HepG2 (cell line): ENCODE measurements at regions of chr6 and their contacts with region 1.

Region 1: DNA sequence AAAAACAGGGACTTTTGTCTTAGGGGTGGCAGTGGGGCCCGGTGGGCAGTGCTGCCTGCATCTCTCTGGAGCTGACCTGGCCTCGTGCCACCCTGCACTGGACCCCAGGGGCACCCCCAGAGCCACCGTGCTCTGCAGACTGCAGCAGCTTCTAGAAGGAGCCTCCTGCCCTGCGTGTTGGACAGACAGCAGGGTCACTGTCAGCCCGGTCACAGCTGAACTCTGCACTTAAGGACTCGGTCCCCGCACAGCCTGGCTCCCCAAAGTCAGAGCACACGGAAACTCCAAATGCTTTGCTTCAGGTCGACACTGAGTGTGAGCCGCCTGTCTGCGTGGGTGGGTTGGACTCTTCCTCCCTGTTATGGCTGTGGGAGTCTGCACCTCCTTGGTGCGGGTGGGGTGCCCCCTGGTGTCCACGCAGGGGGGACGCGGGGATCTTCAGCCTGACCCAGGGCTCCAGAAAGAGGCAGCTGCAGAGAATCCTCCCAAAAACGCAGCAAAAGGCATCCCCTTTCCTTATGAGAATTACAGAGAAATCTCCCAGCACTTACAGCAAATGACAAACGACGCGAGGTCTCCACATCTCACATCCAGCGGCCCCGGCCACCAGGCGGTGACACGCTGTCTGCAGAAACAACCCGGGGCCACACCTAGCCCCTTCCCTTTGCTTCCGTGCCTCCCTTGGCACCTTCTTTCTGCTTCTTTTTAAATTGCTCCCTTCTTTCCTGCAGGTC is 36.3 kb upstream of the DACT2 start:
- DNase-seq: peak; percentile 49
- ATAC-seq: peak; percentile 99
- H3K4me3 ChIP-seq: peak overlapping the region in 1 of 3 experiments; percentile 61; a peak in 2 of 6 replicates
- H3K27ac ChIP-seq: no peak overlapping the region
- H3K4me1 ChIP-seq: peaks cover 10% of the 10 kb centered on the region
- H3K27me3 ChIP-seq: peaks cover 0 to 3% of the 10 kb centered on the region in 2 experiments; a peak in 1 of 5 replicates
- CTCF ChIP-seq: peak; percentile 99
- EP300 ChIP-seq: no peak
- POLR2A ChIP-seq: no peak
- RAD21 ChIP-seq: peak; percentile 99

Region 2: DNA sequence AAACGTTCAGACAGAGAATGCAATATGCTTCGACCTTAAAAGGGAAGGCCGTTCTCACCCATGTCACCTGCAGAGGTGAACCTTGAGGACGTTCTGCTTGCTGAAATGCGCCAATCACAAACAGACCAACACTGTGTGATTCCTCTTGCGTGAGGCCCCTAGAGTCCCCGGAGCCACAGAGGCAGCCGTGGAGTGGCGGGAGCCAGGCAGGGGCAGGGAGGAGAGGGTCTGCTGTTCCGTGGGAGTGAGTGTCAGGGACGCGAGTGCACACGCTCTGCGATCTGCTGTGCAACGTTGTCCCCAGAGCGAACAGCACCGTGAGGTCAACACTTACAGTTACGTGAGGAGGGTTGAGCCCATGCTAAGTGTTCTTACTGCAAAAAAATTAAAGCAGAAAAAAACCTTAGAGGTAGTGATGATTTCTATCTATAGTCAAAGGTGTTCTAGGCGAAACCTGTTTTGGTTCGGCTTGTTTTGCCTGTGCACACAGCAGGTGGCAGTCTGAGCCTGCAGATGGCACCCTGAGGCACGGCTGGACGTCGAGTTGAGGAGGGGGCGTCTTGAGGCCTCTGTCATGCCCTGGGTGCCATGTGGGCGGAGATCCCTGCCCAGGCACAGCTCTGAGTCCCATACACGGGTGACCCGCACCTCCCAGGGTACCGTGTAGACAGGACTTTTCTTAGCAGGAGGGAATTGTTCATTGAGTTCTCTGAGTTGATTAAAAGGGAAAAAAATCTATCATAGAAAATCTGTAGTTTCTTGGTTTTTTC is 205.1 kb before region 1 on chr6:
- CTCF ChIA-PET with region 1: interaction called, 40 read pairs
- POLR2A ChIA-PET with region 1: no interaction called
- in situ Hi-C with region 1: no loop called
- intact Hi-C with region 1: loop called (anchors 1 kb)
- DNase-seq: no peak
- ATAC-seq: peak; percentile 69
- H3K4me3 ChIP-seq: no peak overlapping the region
- H3K27ac ChIP-seq: no peak overlapping the region
- H3K4me1 ChIP-seq: peaks cover 33% of the 10 kb centered on the region
- H3K27me3 ChIP-seq: peaks cover 0 to 35% of the 10 kb centered on the region in 2 experiments; a peak in 4 of 5 replicates
- CTCF ChIP-seq: peak; percentile 95
- EP300 ChIP-seq: no peak
- POLR2A ChIP-seq: no peak
- RAD21 ChIP-seq: peak; percentile 91

Region 3: GRCh38 chr6:168194028-168194721 is 161.7 kb before region 1 on chr6:
- CTCF ChIA-PET with region 1: interaction called, 39 read pairs
- POLR2A ChIA-PET with region 1: no interaction called
- in situ Hi-C with region 1: loop called (anchors 5 kb)
- intact Hi-C with region 1: loop called (anchors 1 kb)
- DNase-seq: peak; percentile 60
- ATAC-seq: peak; percentile 75
- H3K4me3 ChIP-seq: peak overlapping the region in 1 of 3 experiments; percentile 17; a peak in 1 of 6 replicates
- H3K27ac ChIP-seq: no peak overlapping the region
- H3K4me1 ChIP-seq: peaks cover 69% of the 10 kb centered on the region
- H3K27me3 ChIP-seq: peaks cover 2 to 16% of the 10 kb centered on the region in 2 experiments; a peak in 4 of 5 replicates
- CTCF ChIP-seq: peak; percentile 93
- EP300 ChIP-seq: no peak
- POLR2A ChIP-seq: no peak
- RAD21 ChIP-seq: peak; percentile 94

Region 4: DNA sequence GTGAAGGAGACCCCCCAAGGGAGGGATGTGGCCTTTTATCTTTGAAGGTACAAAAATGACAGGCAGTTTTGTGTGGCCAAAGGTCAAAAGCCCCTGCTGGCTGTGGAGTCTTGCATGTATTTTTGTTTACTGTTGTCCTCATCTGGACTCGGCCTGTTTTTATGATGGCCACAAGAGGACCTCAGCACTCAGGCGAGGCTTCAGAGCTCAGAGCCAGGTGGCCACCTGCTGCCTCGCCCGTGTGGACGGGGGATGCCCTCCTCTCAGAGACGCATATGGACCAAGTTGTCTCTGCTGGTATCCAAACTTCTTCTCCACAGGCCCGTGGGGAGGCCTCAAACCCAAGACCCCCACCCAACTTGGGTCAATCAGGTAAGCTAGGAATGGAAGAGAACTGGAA is 154.5 kb before region 1 on chr6:
- CTCF ChIA-PET with region 1: interaction called, 21 read pairs
- POLR2A ChIA-PET with region 1: no interaction called
- in situ Hi-C with region 1: no loop called
- intact Hi-C with region 1: loop called (anchors 1 kb)
- DNase-seq: peak; percentile 63
- ATAC-seq: peak; percentile 85
- H3K4me3 ChIP-seq: peak overlapping the region in 2 of 3 experiments; percentile 25 to 45; a peak in 1 of 6 replicates
- H3K27ac ChIP-seq: peak overlapping the region; percentile 59
- H3K4me1 ChIP-seq: peaks cover 59% of the 10 kb centered on the region
- H3K27me3 ChIP-seq: no peaks in the 10 kb centered on the region
- CTCF ChIP-seq: peak; percentile 91
- EP300 ChIP-seq: no peak
- POLR2A ChIP-seq: no peak
- RAD21 ChIP-seq: peak; percentile 93